Posterior cingulate gyrus (tissue), 11 donors: ENCODE measurements at regions of chr20 and their contacts with region 1.

Region 1: DNA sequence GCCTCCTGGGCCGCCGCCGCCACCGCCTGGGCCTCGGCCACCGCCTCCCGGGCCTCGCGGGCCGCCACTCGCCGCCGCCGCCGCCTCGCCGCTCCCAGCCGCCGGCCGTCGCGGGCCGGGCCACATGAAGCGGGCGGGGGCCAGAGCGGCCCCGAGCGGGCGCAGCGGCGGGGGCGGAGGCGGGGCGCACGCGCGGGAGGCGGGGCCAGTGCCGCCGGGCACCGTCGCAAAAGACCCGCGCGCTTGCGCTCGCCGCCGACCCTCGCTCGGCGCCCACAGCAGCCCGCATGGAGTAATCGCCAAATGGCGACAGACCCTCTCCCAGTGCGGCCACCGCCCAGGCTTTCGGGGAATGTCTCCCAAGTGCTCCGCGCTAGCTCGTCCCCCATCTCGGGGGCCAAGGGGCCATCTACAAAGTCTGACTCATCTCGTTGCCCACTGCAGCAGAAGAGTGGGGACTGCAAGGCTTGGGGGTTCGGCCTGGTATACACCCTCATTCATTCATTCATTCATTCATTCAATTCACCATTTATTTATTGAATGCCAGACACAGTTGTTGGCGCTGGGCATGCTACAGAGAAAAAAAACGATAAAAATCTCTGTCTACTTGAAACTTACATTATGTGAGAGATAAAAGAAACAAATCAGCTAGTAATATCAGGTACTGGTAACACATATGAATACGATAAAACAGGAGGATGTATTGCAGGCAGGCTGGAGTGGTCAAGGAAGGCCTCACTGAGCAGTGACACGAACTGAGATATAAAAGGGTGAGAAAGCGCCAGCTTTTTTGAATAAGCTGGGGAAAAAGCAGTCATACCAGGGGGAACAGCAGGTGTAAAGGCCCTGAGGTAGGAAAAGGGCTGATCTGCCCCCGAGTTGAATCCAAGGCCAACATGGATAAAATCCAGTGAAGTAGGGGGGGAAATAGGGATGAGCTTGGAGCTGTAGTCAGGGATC is at the start of gene B4GALT5:
- DNase-seq: peak; percentile 67 to 97 (median 84)

Region 2: GRCh38 chr20:49768204-49769047 is 54.4 kb after region 1 on chr20:
- intact Hi-C with region 1: loop called (anchors 5 kb)
- DNase-seq: no peak

Region 3: DNA sequence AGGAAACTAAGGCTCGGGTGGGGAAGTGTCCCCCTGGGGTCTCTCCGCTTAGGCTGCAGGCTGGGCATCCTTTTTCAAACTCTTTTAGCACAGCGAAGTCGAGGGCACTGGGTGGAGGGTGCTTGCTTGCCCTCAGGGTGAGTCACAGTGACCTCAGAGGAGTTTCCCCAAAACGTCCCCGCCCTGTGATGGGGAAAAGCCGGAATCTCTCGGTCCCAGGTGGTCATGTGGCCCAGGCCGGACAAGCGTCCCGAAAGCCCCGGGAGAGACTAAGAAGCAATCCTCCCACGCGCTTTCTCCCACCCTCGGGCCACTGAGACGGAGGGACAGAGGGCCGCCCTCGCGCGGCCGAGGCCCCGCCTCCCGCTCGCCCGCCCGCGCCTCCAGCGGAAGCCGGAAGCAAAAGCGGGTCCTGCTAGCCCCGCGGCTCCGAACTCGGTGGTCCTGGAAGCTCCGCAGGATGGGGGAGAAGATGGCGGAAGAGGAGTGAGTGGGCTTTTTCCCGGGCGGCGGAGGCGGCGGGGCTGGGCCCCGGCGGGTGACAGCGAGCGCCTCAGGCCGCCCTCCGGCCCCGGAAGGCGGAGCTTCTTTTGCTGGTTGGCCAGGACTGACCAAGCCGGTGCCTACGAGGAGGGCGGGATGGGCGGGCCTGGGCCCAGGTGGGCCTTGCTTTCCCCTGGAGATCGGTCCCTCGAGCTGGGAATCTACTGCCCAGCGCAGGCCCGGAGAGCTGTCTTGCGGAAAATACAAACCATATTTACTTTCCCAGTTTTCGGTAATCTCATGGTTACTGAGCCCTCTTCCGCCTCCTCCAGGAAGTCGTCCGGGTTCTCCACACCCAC is 98.7 kb after region 1 on chr20 and contains the start of gene SLC9A8:
- intact Hi-C with region 1: loop called (anchors 2 kb)
- DNase-seq: peak; percentile 75 to 99 (median 89)

Region 4: DNA sequence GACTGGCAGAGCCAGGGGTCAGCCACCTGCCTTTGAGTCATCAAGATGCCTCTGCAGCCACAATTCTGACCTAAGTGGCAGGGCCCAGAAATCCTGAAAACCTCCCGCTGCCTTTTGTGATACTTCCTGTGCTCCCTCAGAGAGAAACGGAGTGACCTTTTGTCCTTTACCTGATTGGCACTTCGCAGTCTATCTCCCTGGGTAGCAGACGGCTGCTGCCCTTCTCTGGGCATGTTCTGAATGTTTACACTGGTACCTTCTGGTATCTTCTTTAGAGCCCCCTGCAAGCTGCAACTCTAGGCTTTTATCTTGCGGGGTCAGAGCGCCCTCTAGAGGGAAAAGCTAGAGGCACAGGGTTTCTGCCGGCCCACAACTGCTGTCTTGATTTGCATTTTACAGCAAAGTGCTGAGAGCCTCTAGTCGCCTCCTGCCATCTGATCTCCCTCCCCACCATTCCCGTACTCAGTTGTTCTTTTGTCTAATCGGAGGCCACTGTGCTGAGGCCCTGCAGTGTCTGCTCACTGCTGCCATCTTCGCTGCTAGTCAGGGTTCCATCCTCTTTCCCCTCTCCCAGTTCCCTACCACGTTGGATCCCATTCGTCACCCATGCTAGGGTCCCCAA is 174.4 kb after region 1 on chr20:
- intact Hi-C with region 1: loop called (anchors 5 kb)
- DNase-seq: peak; percentile 66 to 98 (median 84)